ENCODE measurements at regions of chr6 and their contacts with region 1.

Region 1: DNA sequence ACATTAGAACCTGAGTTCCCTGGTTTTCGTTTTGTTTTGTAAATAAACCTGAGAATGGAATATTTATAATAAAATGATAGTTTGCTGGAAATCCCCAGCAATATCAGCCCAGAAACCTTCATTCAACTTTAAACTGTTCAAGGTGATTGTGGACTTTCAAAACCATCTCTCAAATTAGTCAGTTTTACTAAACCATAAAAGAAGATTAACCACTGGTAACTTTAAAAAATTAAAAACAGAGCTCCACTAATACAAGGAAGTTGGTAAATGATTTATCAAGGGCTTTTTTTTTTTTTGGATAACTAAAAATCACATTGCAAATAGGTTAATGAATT is 10.0 kb downstream of the MBOAT1 start:
- DNase-seq: no peak
- ATAC-seq: no peak
- H3K4me3 ChIP-seq: no peak overlapping the region
- H3K4me3 Mint-ChIP-seq: no peak overlapping the region
- H3K27ac ChIP-seq: no peak overlapping the region
- H3K27ac Mint-ChIP-seq: peak overlapping the region in 1 of 9 donors; percentile 50
- H3K4me1 ChIP-seq: peaks cover 16 to 47% of the 10 kb centered on the region in 2 donors
- H3K4me1 Mint-ChIP-seq: peaks cover 29 to 71% (median 38%) of the 10 kb centered on the region in 7 donors
- H3K27me3 ChIP-seq: no peaks in the 10 kb centered on the region
- H3K27me3 Mint-ChIP-seq: no peaks in the 10 kb centered on the region

Region 2: DNA sequence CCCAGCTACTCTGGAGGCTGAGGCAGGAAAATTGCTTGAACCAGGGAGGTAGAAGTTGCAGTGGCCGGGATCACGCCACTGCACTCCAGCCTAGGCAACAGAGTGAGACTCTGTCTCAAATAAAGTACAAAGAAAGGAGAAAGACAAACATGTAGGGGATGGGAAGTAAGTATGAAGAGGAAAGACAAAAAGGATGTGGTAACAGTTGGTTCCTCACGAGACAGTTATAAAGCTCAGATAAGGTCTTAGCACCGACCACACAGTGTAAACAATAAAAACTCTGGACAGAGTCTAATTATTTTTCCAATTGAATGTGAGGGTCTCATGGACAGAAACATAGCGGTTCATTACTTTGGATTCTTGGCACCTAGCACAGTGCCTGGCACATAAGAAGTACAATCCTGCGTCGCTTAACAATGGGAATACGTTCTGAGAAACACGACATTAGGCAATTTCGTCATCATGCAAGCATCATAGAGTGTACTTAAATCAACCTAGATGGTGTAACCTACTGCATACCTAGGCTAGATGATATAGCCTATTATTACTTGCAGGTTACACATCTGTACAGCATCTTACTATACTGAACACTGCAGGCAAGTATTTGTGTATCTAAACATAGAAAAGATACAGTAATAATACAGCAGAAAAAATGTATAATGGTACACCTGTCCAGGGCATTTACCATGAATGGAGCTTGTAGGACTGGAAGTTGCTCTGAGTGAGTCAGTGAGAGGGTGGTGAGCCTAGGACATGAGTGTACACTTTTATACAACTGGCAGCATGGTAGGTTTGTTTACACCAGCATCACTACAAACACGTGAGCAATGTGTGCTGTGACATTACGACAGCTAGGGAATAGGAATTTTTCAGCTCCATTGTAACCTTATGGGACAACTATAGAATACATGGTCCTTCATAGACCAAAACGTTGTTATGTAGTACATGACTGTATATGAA is 28.2 kb before region 1 on chr6:
- CTCF ChIA-PET with region 1: no interaction called
- POLR2A ChIA-PET with region 1: no interaction called
- intact Hi-C with region 1: loop called in 1 of 2 experiments (anchors 2 kb)
- DNase-seq: peak in 5 of 9 donors; percentile 5 to 27 (median 20)
- ATAC-seq: peak; percentile 73
- H3K4me3 ChIP-seq: no peak overlapping the region
- H3K4me3 Mint-ChIP-seq: peak overlapping the region in 9 of 10 donors; percentile 13 to 76 (median 48)
- H3K27ac ChIP-seq: no peak overlapping the region
- H3K27ac Mint-ChIP-seq: peak overlapping the region in 8 of 9 donors; percentile 0 to 75 (median 52)
- H3K4me1 ChIP-seq: peaks cover 0 to 15% of the 10 kb centered on the region in 2 donors
- H3K4me1 Mint-ChIP-seq: peaks cover 25 to 40% (median 34%) of the 10 kb centered on the region in 7 donors
- H3K27me3 ChIP-seq: no peaks in the 10 kb centered on the region
- H3K27me3 Mint-ChIP-seq: no peaks in the 10 kb centered on the region

Region 3: GRCh38 chr6:20212392-20213217 is 10.3 kb after region 1 on chr6 and contains the start of gene MBOAT1:
- CTCF ChIA-PET with region 1: interaction called, 3 read pairs
- POLR2A ChIA-PET with region 1: interaction called, 4 read pairs
- intact Hi-C with region 1: loop called (anchors 1 kb)
- DNase-seq: peak; percentile 38 to 85 (median 54)
- ATAC-seq: peak; percentile 82
- H3K4me3 ChIP-seq: peak within 1 kb of the TSS; percentile 73
- H3K4me3 Mint-ChIP-seq: peak within 1 kb of the TSS; percentile 82 to 99 (median 96)
- H3K27ac ChIP-seq: peak within 1 kb of the TSS; percentile 62
- H3K27ac Mint-ChIP-seq: peak within 1 kb of the TSS; percentile 56 to 94 (median 91)
- H3K4me1 ChIP-seq: peaks cover 11 to 20% of the 10 kb centered on the region in 2 donors
- H3K4me1 Mint-ChIP-seq: peaks cover 18 to 41% (median 27%) of the 10 kb centered on the region in 7 donors
- H3K27me3 ChIP-seq: no peaks in the 10 kb centered on the region
- H3K27me3 Mint-ChIP-seq: peaks cover 0 to 5% (median 0%) of the 10 kb centered on the region in 5 donors
- total RNA-seq, gene MBOAT1: 6.2 to 24.7 (median 10.0) TPM

Region 4: DNA sequence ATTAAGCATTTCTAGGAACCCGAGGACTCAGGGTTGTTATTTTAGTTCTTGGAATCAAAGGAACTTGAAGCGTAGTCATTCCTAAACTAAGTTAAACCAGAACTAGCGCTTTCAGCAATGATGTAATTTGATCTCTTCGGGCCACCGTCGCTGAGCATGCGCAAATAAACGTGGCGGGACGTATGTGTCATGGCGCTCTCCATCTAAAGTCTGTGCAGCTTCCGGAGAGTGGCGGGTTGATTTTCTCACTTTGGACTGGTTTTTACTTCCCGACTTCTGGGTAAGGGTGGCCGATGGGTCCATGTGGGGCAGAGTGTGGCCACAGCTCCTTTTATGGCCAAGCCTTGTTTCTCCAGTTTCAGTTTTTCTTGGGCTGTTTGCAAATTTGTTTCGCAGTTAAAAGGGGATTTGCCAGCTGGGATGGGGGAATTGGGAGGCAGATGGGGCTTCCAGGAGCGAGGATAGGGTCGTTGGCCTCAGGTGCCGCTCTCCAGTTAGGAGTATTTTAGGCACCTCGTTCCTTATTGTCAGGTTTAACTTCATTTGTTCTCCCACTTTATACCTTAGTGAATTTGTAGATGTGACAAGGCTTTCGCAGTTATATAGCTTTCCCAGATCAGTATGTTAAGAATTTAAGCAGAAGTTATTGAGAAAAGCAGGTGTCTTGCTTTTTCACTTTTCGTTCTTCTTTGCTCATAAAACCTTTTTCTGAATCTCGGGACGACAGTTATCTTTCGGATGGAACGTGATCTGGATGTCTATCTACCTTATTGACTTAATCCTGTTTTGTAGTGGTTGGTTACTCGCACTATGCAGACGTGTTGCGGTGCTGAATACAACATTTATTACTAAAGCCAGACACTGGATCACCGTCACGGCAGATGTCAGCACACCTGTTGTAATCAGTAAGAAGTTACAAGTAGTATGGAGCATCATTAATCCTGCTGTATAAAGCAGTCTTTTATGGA is 332.3 kb after region 1 on chr6 and contains the start of gene CDKAL1:
- CTCF ChIA-PET with region 1: no interaction called
- POLR2A ChIA-PET with region 1: no interaction called
- intact Hi-C with region 1: loop called in 1 of 2 experiments (anchors 2 kb)
- DNase-seq: peak; percentile 69 to 89 (median 86)
- ATAC-seq: peak; percentile 95
- H3K4me3 ChIP-seq: peak within 1 kb of the TSS; percentile 92
- H3K4me3 Mint-ChIP-seq: peak within 1 kb of the TSS; percentile 88 to 100 (median 97)
- H3K27ac ChIP-seq: peak within 1 kb of the TSS; percentile 89
- H3K27ac Mint-ChIP-seq: peak within 1 kb of the TSS; percentile 94 to 100 (median 99)
- H3K4me1 ChIP-seq: peaks cover 0 to 11% of the 10 kb centered on the region in 2 donors
- H3K4me1 Mint-ChIP-seq: peaks cover 22 to 53% (median 41%) of the 10 kb centered on the region in 7 donors
- H3K27me3 ChIP-seq: no peaks in the 10 kb centered on the region
- H3K27me3 Mint-ChIP-seq: peaks cover 0 to 4% (median 0%) of the 10 kb centered on the region in 5 donors
- total RNA-seq, gene CDKAL1: 23.6 to 30.3 (median 25.0) TPM

Measured in naive thymus-derived CD4-positive, alpha-beta T cell (primary cell).